ENCODE measurements at regions of chr6 and their contacts with region 1.

Region 1: DNA sequence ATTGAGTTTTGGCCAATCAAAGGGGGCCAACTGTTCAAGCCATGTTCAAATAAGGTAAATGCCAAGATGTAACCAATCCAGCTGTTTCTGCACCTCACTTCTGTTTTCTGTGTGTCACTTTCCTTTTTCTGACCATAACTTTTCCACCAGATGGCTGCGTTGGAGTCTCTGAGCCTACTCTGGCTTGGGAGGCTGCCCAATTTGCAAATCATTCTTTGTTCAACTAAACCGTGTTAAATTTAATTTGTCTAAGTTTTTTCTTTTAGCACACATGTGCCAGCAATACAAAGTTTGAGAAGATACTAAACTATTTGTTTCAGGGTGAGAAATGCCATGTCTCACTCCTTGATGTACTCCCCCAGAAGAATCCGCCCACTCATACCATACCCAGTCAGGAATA is 52.1 kb downstream of the IYD start:
- DNase-seq: no peak
- ATAC-seq: no peak
- H3K4me3 ChIP-seq: no peak overlapping the region
- H3K27ac ChIP-seq: no peak overlapping the region
- H3K4me1 ChIP-seq: peaks cover 5% of the 10 kb centered on the region
- H3K27me3 ChIP-seq: no peaks in the 10 kb centered on the region
- CTCF ChIP-seq: no peak
- POLR2A ChIP-seq: no peak

Region 2: DNA sequence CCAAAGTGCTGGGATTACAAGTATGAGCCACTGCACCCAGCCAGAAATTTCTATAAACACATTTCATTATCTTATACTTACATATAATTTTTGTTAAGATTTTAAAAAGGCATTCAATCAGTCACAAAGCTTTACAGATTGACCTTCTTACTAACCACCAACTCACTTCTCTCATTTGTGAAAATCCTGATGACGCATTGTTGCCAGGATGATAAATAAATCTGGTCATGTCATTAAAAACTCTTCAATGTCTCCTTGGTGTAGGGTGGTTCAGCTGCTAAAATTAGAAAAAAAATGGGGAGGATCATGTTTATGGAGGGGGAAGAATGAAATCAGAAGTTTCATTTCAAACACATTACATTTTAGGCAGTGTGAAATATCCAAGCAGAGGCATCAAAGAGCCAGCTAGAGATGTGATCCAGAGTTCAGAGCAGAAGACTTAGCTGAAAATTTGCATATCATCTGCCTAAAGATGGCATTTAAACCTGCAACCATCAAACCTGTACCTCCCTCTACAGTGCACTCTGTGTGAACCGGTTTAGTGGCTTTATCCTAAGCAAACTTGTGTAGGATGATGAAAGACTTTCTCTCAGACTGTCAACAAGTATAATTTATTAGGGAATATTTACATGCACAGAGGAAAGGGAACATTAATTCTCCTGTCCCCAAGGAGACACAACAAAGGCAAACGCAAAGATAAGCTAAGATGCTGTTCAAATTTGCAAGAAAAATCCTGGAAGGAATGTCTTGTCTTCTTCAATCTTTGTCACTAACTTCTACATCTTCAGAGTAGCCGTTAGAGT is 93.9 kb after region 1 on chr6:
- intact Hi-C with region 1: no loop called
- DNase-seq: no peak
- ATAC-seq: no peak
- H3K4me3 ChIP-seq: no peak overlapping the region
- H3K27ac ChIP-seq: no peak overlapping the region
- H3K4me1 ChIP-seq: no peaks in the 10 kb centered on the region
- H3K27me3 ChIP-seq: no peaks in the 10 kb centered on the region
- CTCF ChIP-seq: no peak
- POLR2A ChIP-seq: no peak

Region 3: DNA sequence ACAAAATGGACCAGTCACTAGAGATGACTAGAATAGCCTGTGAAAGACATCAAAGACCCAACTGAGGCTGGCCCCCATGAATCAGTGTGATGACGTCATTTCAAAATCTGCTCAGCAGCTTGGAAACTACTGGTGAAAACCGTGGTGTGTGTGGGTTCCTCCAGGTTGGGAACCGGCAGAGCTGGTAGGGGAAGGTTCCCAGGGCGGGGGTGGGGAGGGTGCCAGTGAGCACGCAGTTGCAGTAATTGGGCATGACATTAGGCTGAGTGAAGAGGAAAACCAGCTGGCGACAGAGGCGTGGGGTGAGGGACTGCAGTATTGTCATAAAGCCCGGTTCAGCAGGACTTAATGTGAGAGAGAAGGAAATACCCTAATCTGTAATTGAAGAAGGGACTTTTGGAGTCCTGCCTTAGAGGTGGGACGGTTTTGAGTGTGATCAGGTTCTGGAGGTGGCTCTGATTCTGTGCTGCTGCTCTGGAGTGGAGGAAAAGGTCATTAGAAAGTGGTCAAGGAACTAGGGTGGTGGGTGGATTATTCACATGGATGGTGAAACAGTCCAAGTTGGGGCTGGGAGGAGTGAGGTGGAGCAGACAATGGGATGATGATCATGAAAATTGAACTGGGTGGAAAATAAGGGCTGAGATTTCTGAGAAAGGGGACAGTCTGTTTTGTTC is 392.5 kb after region 1 on chr6:
- intact Hi-C with region 1: loop called (anchors 5 kb)
- DNase-seq: no peak
- ATAC-seq: no peak
- H3K4me3 ChIP-seq: no peak overlapping the region
- H3K27ac ChIP-seq: no peak overlapping the region
- H3K4me1 ChIP-seq: no peaks in the 10 kb centered on the region
- H3K27me3 ChIP-seq: no peaks in the 10 kb centered on the region
- CTCF ChIP-seq: no peak
- POLR2A ChIP-seq: no peak